ENCODE measurements at regions of chr17 and their contacts with region 1.

Region 1: DNA sequence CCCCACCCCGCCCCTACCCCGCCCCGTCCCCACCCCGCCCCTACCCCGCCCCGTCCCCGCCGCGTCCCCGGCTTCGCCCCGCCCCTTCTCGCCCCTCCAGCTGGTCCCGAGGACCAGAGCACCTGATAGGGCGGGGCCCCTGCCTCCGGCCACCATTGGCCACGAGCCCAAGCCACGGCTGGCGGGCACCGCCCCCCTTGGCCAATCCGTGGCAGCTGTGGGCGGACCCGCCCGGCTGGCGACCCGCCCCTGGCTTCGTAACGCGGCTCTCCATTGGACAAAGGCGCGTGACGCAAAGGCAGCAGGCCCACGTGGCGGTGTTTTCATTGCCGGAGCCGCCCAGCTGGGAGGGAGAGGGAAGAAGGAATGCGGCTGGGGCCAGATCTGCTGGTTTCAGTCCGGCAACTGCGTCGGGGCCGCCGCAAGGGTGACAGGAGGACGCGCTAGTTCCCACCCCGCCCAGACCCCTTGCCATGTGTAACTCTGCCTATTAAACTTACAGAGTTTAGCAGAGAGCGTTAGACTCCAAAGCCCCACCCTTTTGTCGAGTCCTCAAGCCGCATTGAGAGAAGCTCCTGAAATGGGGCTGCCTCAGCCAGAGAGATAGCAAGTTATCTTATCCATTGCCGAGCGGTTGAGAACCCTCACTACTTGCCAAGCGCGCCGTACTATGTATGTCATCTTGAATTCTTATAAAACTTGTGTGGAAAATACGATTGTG is 403 bp upstream of the WIPI1 start:
- DNase-seq: peak; percentile 98
- ATAC-seq: peak; percentile 87
- H3K4me3 ChIP-seq: peak overlapping the region; percentile 56 to 70 (median 60)
- H3K27ac ChIP-seq: peak overlapping the region; percentile 58
- H3K4me1 ChIP-seq: peaks cover 77% of the 10 kb centered on the region
- H3K27me3 ChIP-seq: no peaks in the 10 kb centered on the region
- CTCF ChIP-seq: peak; percentile 25; the same call in 1 of the 2 replicates
- EP300 ChIP-seq: no peak; a peak in 2 of 4 replicates
- POLR2A ChIP-seq: peak; percentile 62 to 82
- RAD21 ChIP-seq: peak; percentile 35; the same call in 1 of the 2 replicates

Region 2: DNA sequence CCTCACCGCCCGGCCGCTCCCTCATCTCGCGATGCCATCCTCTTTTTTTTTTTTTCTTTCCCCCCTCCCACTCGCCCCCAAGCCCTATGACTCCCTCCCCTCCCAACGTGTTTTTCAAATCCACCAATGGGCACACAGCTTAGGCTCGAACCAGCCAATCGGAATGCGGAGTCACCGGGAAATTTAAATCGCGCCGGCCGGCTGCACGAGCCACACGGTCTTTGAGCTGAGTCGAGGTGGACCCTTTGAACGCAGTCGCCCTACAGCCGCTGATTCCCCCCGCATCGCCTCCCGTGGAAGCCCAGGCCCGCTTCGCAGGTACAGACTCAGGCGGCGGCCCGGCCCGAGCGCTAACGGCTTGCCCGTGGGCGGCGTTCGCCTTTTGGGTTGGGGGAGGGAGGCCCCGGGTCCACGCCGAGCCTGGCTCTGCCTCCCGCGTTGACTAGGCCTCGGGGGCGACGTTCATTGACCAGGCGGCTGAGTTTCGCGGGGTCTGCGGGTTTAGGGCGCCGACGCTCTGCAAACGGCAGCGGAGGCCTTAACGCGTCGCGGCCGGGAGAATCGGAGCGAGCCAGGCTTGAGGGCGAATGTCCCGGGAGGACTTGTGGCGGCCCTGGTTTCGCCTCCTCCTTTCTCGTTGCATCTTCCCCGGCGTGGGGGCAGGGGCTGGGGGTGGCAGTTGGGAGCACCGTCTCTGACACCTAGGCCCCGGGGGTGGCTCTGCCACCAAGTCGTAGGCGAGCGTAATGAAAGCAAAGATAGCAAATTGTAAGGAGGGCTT is 422.0 kb before region 1 on chr17 and contains the start of gene KPNA2:
- CTCF ChIA-PET with region 1: no interaction called
- POLR2A ChIA-PET with region 1: no interaction called
- in situ Hi-C with region 1: no loop called
- intact Hi-C with region 1: loop called (anchors 10 kb)
- DNase-seq: peak; percentile 99
- ATAC-seq: peak; percentile 94
- H3K4me3 ChIP-seq: peak within 1 kb of the TSS; percentile 81 to 98 (median 93)
- H3K27ac ChIP-seq: peak within 1 kb of the TSS; percentile 97
- H3K4me1 ChIP-seq: peaks cover 56% of the 10 kb centered on the region
- H3K27me3 ChIP-seq: no peaks in the 10 kb centered on the region; a peak in 1 of 5 replicates
- CTCF ChIP-seq: no peak
- EP300 ChIP-seq: peak in 1 of 2 experiments; percentile 78; a peak in 2 of 4 replicates
- POLR2A ChIP-seq: peak; percentile 97 to 98
- RAD21 ChIP-seq: peak; percentile 71
- total RNA-seq, gene KPNA2: 305 and 410 TPM in 2 replicates

Region 3: GRCh38 chr17:68172461-68172954 is 285.2 kb before region 1 on chr17:
- CTCF ChIA-PET with region 1: interaction called, 12 read pairs
- POLR2A ChIA-PET with region 1: no interaction called
- in situ Hi-C with region 1: loop called (anchors 5 kb)
- intact Hi-C with region 1: no loop called
- DNase-seq: peak; percentile 67
- ATAC-seq: peak; percentile 68
- H3K4me3 ChIP-seq: no peak overlapping the region
- H3K27ac ChIP-seq: no peak overlapping the region
- H3K4me1 ChIP-seq: peaks cover 37% of the 10 kb centered on the region
- H3K27me3 ChIP-seq: peaks cover 0 to 9% of the 10 kb centered on the region in 2 experiments; a peak in 2 of 5 replicates
- CTCF ChIP-seq: peak; percentile 97
- EP300 ChIP-seq: no peak
- POLR2A ChIP-seq: no peak
- RAD21 ChIP-seq: peak; percentile 94

Region 4: GRCh38 chr17:68247445-68248198 is 210.1 kb before region 1 on chr17 and contains the start of gene AMZ2:
- CTCF ChIA-PET with region 1: no interaction called
- POLR2A ChIA-PET with region 1: interaction called, 53 read pairs
- in situ Hi-C with region 1: no loop called
- intact Hi-C with region 1: no loop called
- DNase-seq: peak; percentile 88
- ATAC-seq: peak; percentile 99
- H3K4me3 ChIP-seq: peak within 1 kb of the TSS; percentile 77 to 94 (median 80)
- H3K27ac ChIP-seq: peak within 1 kb of the TSS; percentile 77
- H3K4me1 ChIP-seq: peaks cover 27% of the 10 kb centered on the region
- H3K27me3 ChIP-seq: no peaks in the 10 kb centered on the region; a peak in 2 of 5 replicates
- CTCF ChIP-seq: peak; percentile 29
- EP300 ChIP-seq: no peak
- POLR2A ChIP-seq: peak; percentile 90 to 93
- RAD21 ChIP-seq: peak; percentile 44
- total RNA-seq, gene AMZ2: 86.9 and 99.9 TPM in 2 replicates

Region 5: DNA sequence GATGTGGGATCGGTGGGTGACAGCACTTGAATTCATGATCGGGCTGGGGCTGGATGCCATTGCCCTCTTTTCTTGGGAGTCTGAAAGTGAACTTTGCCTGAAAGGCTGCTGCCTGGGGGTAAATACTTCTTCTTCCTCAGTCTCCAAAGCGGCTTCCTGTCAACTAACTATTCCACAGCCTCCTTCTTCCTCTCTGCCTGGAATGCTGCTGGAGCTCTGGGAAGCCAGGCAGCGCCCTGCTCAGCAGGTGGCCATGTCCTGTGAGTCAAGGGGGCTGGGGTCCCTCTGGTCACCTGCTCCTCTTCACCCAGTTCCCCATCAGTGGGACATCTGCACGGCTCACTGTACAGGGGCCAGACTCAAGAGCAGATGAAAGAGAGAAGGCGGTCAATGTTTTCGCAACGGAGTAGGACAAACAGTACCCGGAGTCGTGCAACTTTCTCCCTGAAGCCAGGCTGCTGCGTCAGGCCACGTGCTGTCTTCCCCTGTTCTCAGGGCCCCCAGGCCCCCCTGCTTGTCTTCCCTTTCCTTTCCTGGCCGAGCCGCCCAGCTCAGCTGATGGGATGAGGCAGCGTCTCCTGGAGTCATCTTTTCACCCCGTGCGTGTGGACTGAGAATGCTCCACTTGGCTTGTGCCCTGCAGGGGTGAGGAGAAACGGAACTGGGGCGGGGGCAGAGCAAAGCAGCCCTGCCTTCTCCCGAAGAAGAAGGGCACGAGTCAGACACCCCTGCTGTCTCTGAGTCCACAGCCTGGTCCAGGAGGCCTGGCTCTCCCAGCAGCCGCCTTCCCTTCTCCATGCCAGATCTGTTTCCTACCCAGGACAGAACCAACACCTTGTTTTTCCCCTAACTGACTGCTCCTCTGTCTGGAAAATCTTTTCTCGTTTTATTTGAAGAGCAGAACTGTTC is 79.6 kb before region 1 on chr17:
- CTCF ChIA-PET with region 1: no interaction called
- POLR2A ChIA-PET with region 1: interaction called, 13 read pairs
- in situ Hi-C with region 1: no loop called
- intact Hi-C with region 1: loop called (anchors 2 kb)
- DNase-seq: peak; percentile 95
- ATAC-seq: peak; percentile 80
- H3K4me3 ChIP-seq: peak overlapping the region; percentile 37 to 72 (median 38)
- H3K27ac ChIP-seq: peak overlapping the region; percentile 97
- H3K4me1 ChIP-seq: peaks cover 74% of the 10 kb centered on the region
- H3K27me3 ChIP-seq: no peaks in the 10 kb centered on the region
- CTCF ChIP-seq: peak; percentile 14
- EP300 ChIP-seq: peak; percentile 70 to 87; a peak in 3 of 4 replicates
- POLR2A ChIP-seq: peak; percentile 59 to 87
- RAD21 ChIP-seq: peak; percentile 15

Region 6: GRCh38 chr17:68420065-68420464 is 37.6 kb before region 1 on chr17:
- CTCF ChIA-PET with region 1: no interaction called
- POLR2A ChIA-PET with region 1: no interaction called
- in situ Hi-C with region 1: no loop called
- intact Hi-C with region 1: no loop called
- DNase-seq: no peak
- ATAC-seq: no peak
- H3K4me3 ChIP-seq: no peak overlapping the region
- H3K27ac ChIP-seq: no peak overlapping the region
- H3K4me1 ChIP-seq: peaks cover 3% of the 10 kb centered on the region
- H3K27me3 ChIP-seq: no peaks in the 10 kb centered on the region
- CTCF ChIP-seq: no peak
- EP300 ChIP-seq: no peak
- POLR2A ChIP-seq: no peak
- RAD21 ChIP-seq: no peak

Region 7: GRCh38 chr17:68435876-68436842 is 21.5 kb before region 1 on chr17:
- CTCF ChIA-PET with region 1: interaction called, 19 read pairs
- POLR2A ChIA-PET with region 1: interaction called, 21 read pairs
- in situ Hi-C with region 1: no loop called
- intact Hi-C with region 1: loop called (anchors 2 kb)
- DNase-seq: peak; percentile 79
- ATAC-seq: peak; percentile 81
- H3K4me3 ChIP-seq: no peak overlapping the region
- H3K27ac ChIP-seq: no peak overlapping the region
- H3K4me1 ChIP-seq: peaks cover 41% of the 10 kb centered on the region
- H3K27me3 ChIP-seq: no peaks in the 10 kb centered on the region
- CTCF ChIP-seq: peak; percentile 95
- EP300 ChIP-seq: no peak
- POLR2A ChIP-seq: no peak
- RAD21 ChIP-seq: peak; percentile 75

Region 8: GRCh38 chr17:68759343-68760132 is 301.8 kb after region 1 on chr17:
- CTCF ChIA-PET with region 1: no interaction called
- POLR2A ChIA-PET with region 1: interaction called, 4 read pairs
- in situ Hi-C with region 1: loop called (anchors 10 kb)
- intact Hi-C with region 1: no loop called
- DNase-seq: peak; percentile 91
- ATAC-seq: peak; percentile 99
- H3K4me3 ChIP-seq: peak overlapping the region; percentile 60 to 67 (median 61)
- H3K27ac ChIP-seq: peak overlapping the region; percentile 92
- H3K4me1 ChIP-seq: peaks cover 35% of the 10 kb centered on the region
- H3K27me3 ChIP-seq: 0 out of 5 replicates have a peak, but pooled peaks cover 0 to 4% of the 10 kb centered on the region in 2 experiments
- CTCF ChIP-seq: peak; percentile 97
- EP300 ChIP-seq: peak in 1 of 2 experiments; percentile 58; a peak in 2 of 4 replicates
- POLR2A ChIP-seq: peak; percentile 63 to 90; a peak in 3 of 4 replicates
- RAD21 ChIP-seq: peak; percentile 97